Activated CD4-positive, alpha-beta T cell treated with anti-CD3 and anti-CD28 coated beads, Interleukin-2, amount 10 ng/mL, durations not matched to agents 24 days and 14 days (primary cell): ENCODE measurements at regions of chrX and their contacts with region 1.

Region 1: DNA sequence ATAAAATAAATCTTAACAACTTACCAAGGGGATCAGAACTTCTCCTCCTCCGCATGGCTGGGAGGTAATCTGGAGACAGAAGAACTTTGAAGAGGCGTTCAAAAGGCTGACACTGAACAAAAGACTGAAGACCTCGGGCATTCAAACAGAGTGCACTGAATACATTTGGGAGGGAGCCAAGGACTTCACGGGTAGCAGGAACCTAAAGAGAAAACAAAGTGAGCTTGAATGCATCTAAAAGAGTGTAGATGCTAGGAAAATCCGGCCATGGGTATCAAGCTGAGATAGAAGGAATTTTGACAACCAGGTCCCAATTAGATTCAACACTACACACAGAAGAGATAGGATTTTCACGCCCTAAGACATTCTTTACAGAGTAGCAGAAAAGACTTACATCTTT is 69.6 kb downstream of the HUWE1 start:
- DNase-seq: no peak
- H3K4me3 Mint-ChIP-seq: no peak overlapping the region
- H3K27ac Mint-ChIP-seq: no peak overlapping the region
- H3K4me1 Mint-ChIP-seq: peaks cover 15% of the 10 kb centered on the region
- H3K27me3 Mint-ChIP-seq: no peaks in the 10 kb centered on the region

Region 2: GRCh38 chrX:53563324-53563723 is 53.6 kb before region 1 on chrX:
- intact Hi-C with region 1: loop called (anchors 10 kb)
- DNase-seq: no peak
- H3K4me3 Mint-ChIP-seq: no peak overlapping the region
- H3K27ac Mint-ChIP-seq: no peak overlapping the region
- H3K4me1 Mint-ChIP-seq: no peaks in the 10 kb centered on the region
- H3K27me3 Mint-ChIP-seq: no peaks in the 10 kb centered on the region

Region 3: GRCh38 chrX:53678667-53679066 is 61.7 kb after region 1 on chrX:
- intact Hi-C with region 1: loop called (anchors 10 kb)
- DNase-seq: peak; percentile 57
- H3K4me3 Mint-ChIP-seq: peak overlapping the region; percentile 53
- H3K27ac Mint-ChIP-seq: peak overlapping the region; percentile 59
- H3K4me1 Mint-ChIP-seq: peaks cover 28% of the 10 kb centered on the region
- H3K27me3 Mint-ChIP-seq: no peaks in the 10 kb centered on the region